Caco-2 (cell line): ENCODE measurements at regions of chr2 and their contacts with region 1.

Region 1: GRCh38 chr2:216698895-216699294 is 3.5 kb upstream of the IGFBP5 start:
- DNase-seq: peak in 1 of 2 experiments; percentile 55
- H3K4me3 ChIP-seq: no peak overlapping the region
- H3K4me3 Mint-ChIP-seq: no peak overlapping the region
- H3K27ac Mint-ChIP-seq: no peak overlapping the region
- H3K4me1 ChIP-seq: peaks cover 6% of the 10 kb centered on the region; the same call in 1 of the 2 replicates
- H3K4me1 Mint-ChIP-seq: peaks cover 6% of the 10 kb centered on the region
- H3K27me3 ChIP-seq: no peaks in the 10 kb centered on the region; the same call in 1 of the 2 replicates
- H3K27me3 Mint-ChIP-seq: peaks cover 16% of the 10 kb centered on the region
- CTCF ChIP-seq: peak; percentile 69 to 80

Region 2: DNA sequence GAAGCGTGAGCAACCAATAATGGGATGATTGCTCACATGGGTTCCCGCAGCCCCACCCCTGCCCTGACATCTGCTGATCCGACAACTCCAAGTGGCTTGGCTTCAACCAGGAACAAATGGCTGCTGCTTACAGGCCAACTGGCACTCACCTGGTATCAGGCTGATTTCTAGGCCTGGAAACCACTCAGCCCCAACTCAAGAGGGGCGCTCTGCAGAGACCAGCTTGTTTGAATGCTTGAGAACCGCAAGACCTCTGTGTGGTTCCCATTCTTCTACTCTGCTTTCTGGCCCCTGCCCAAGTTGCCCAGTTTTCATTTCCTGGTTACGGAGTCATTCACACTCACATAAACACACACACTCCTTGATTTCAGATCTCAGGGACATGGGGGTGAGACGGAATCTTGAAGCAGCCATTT is 109.0 kb after region 1 on chr2:
- CTCF ChIA-PET with region 1: no interaction called
- POLR2A ChIA-PET with region 1: no interaction called
- intact Hi-C with region 1: no loop called
- DNase-seq: no peak
- H3K4me3 ChIP-seq: no peak overlapping the region
- H3K4me3 Mint-ChIP-seq: no peak overlapping the region
- H3K27ac Mint-ChIP-seq: no peak overlapping the region
- H3K4me1 ChIP-seq: no peaks in the 10 kb centered on the region
- H3K4me1 Mint-ChIP-seq: no peaks in the 10 kb centered on the region
- H3K27me3 ChIP-seq: no peaks in the 10 kb centered on the region
- H3K27me3 Mint-ChIP-seq: no peaks in the 10 kb centered on the region
- CTCF ChIP-seq: no peak

Region 3: DNA sequence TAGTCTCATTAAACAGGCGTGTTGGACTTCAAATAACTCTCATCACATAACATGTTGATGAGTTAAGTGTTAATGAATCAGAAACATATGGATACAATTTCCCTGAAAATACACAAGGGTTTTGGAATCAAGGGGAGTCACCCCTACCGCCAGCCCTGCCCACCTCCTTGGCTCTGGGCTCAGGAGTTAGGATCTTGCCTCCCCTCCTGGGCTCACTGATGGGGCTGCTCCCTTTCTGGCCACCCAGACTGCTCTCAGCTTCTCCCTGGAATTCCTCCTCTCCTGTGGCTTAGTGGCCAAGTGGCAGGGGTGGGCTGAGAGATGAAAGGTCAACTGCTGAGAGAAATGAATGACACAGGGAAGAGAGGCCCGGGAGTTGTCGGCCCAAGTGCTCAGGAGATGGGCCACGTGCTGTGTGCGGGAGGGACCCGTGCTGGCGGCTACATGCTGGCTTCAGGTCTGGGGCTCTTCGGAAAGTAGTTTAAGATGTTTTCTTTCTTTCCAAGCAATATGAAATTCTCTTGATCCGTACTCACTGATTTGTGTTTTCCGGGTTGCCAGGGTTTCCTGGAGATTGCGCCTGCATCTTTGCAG is 216.8 kb after region 1 on chr2:
- CTCF ChIA-PET with region 1: no interaction called
- POLR2A ChIA-PET with region 1: no interaction called
- intact Hi-C with region 1: no loop called
- DNase-seq: no peak
- H3K4me3 ChIP-seq: no peak overlapping the region
- H3K4me3 Mint-ChIP-seq: no peak overlapping the region
- H3K27ac Mint-ChIP-seq: no peak overlapping the region
- H3K4me1 ChIP-seq: no peaks in the 10 kb centered on the region
- H3K4me1 Mint-ChIP-seq: no peaks in the 10 kb centered on the region
- H3K27me3 ChIP-seq: no peaks in the 10 kb centered on the region
- H3K27me3 Mint-ChIP-seq: no peaks in the 10 kb centered on the region
- CTCF ChIP-seq: no peak

Region 4: GRCh38 chr2:216989340-216990129 is 290.6 kb after region 1 on chr2:
- CTCF ChIA-PET with region 1: no interaction called
- POLR2A ChIA-PET with region 1: no interaction called
- intact Hi-C with region 1: loop called (anchors 5 kb)
- DNase-seq: no peak
- H3K4me3 ChIP-seq: no peak overlapping the region
- H3K4me3 Mint-ChIP-seq: no peak overlapping the region
- H3K27ac Mint-ChIP-seq: no peak overlapping the region
- H3K4me1 ChIP-seq: no peaks in the 10 kb centered on the region
- H3K4me1 Mint-ChIP-seq: no peaks in the 10 kb centered on the region
- H3K27me3 ChIP-seq: no peaks in the 10 kb centered on the region
- H3K27me3 Mint-ChIP-seq: peaks cover 16% of the 10 kb centered on the region
- CTCF ChIP-seq: peak in 1 of 2 experiments; percentile 33

Region 5: DNA sequence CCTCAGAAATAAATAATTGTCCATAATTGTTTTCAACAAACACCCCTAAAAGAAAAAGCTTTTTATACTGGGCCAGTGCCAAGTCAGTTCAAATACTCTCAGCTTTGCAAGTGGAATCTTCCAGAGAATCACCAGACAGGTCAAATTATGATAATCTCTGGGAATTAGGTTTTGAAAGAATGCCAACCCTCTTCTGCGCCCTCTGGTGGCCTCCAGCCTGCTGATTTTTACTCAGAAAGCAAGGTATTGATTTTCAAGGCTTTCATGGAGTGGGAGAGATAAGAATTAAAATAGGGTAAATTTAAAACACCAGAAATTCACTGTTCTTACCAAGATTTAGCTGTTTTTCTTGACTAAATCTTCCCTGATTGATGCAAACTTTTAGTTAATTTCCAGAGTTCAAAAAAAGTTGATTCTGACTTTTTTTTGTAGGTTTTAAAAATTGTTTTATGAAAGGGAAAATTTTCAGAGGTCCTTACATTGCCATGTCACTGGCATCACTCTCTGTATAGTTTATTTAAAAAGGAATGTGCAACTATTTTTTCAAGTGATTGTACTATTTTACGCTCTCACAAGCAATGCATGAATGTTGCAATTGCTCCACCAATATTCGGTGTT is 443.9 kb after region 1 on chr2:
- CTCF ChIA-PET with region 1: no interaction called
- POLR2A ChIA-PET with region 1: no interaction called
- intact Hi-C with region 1: loop called (anchors 1 kb)
- DNase-seq: peak; percentile 51 to 69
- H3K4me3 ChIP-seq: no peak overlapping the region
- H3K4me3 Mint-ChIP-seq: no peak overlapping the region
- H3K27ac Mint-ChIP-seq: no peak overlapping the region
- H3K4me1 ChIP-seq: no peaks in the 10 kb centered on the region
- H3K4me1 Mint-ChIP-seq: no peaks in the 10 kb centered on the region
- H3K27me3 ChIP-seq: no peaks in the 10 kb centered on the region
- H3K27me3 Mint-ChIP-seq: peaks cover 7% of the 10 kb centered on the region
- CTCF ChIP-seq: peak; percentile 67 to 86

Region 6: DNA sequence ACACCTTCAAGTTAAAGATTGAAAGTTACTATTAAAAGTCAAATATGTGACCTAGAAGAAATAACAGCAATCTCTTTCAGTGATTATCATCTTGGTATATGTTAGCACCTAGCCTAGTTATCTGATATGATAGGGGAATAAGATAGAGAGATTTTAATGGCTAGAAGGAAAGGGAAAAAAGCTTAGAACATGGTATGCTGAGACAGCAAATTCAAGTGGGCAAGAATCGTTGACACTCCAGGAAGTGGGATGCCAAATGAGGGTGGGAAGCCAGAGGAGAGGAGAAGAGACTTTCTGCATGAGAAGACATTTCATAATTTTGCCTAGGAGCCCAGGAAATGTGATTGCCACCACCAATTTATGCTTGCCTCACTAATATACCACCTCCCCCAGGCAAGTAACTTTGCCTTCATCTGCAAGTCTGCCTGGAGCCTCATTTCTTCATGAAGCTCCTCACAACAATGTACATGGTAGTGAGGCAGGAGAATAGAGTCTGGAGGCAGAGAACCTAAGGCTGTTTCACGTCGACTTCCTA is 799.0 kb after region 1 on chr2:
- CTCF ChIA-PET with region 1: no interaction called
- POLR2A ChIA-PET with region 1: no interaction called
- intact Hi-C with region 1: loop called (anchors 5 kb)
- DNase-seq: no peak
- H3K4me3 ChIP-seq: no peak overlapping the region
- H3K4me3 Mint-ChIP-seq: no peak overlapping the region
- H3K27ac Mint-ChIP-seq: no peak overlapping the region
- H3K4me1 ChIP-seq: peaks cover 6% of the 10 kb centered on the region; the same call in 1 of the 2 replicates
- H3K4me1 Mint-ChIP-seq: no peaks in the 10 kb centered on the region
- H3K27me3 ChIP-seq: no peaks in the 10 kb centered on the region
- H3K27me3 Mint-ChIP-seq: peaks cover 3% of the 10 kb centered on the region
- CTCF ChIP-seq: no peak